ENCODE measurements at regions of chr6 and their contacts with region 1.

Region 1: GRCh38 chr6:137224799-137225198 is 5.6 kb upstream of the IFNGR1 start:
- DNase-seq: no peak
- H3K4me3 Mint-ChIP-seq: no peak overlapping the region
- H3K27ac Mint-ChIP-seq: peak overlapping the region; percentile 47
- H3K4me1 Mint-ChIP-seq: peaks cover 50% of the 10 kb centered on the region
- H3K27me3 Mint-ChIP-seq: peaks cover 2% of the 10 kb centered on the region

Region 2: DNA sequence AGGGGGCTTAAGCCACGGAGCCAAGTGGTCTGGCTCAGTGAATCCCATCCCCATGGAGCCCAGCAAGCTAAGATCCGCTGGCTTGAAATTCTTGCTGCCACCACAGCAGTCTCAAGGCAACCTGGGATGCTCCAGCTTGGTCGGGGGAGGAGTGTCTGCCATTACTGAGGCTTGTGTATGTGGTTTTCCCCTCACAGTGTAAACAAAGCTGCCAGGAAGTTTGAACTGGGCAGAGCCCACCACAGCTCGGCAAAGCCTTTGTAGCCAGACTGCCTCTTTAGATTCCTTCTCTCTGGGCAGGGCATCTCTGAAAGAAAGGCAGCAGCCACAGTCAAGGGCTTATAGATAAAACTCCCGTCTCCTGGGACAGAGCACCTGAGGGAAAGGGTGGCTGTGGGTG is 154.5 kb before region 1 on chr6:
- intact Hi-C with region 1: no loop called
- DNase-seq: no peak
- H3K4me3 Mint-ChIP-seq: no peak overlapping the region
- H3K27ac Mint-ChIP-seq: no peak overlapping the region
- H3K4me1 Mint-ChIP-seq: no peaks in the 10 kb centered on the region
- H3K27me3 Mint-ChIP-seq: peaks cover 70% of the 10 kb centered on the region

Region 3: GRCh38 chr6:137241481-137242011 is 16.7 kb after region 1 on chr6:
- intact Hi-C with region 1: no loop called
- DNase-seq: no peak
- H3K4me3 Mint-ChIP-seq: no peak overlapping the region
- H3K27ac Mint-ChIP-seq: no peak overlapping the region
- H3K4me1 Mint-ChIP-seq: peaks cover 7% of the 10 kb centered on the region
- H3K27me3 Mint-ChIP-seq: peaks cover 3% of the 10 kb centered on the region

Region 4: GRCh38 chr6:137261393-137262160 is 36.8 kb after region 1 on chr6:
- intact Hi-C with region 1: loop called (anchors 5 kb)
- DNase-seq: no peak
- H3K4me3 Mint-ChIP-seq: no peak overlapping the region
- H3K27ac Mint-ChIP-seq: no peak overlapping the region
- H3K4me1 Mint-ChIP-seq: peaks cover 17% of the 10 kb centered on the region
- H3K27me3 Mint-ChIP-seq: peaks cover 36% of the 10 kb centered on the region

Region 5: DNA sequence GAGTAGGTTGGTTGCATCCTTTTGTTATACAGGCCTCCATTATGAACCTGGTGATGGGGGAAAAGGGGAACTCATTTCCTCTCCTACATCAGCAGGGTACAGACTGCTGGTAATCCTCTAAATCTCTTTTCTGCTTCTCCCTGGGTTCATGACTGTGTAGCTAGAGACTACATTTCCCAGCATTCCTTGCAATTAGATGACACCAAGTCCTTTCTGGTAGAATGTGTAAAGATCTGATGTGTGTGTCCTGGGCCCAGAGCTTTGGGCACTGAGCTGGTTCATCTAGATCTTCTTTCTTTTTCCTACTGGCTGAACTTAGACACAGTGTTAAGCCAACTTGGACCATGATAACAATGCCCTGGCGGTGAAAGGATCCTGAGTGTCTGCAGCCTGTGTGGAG is 99.1 kb after region 1 on chr6:
- intact Hi-C with region 1: no loop called
- DNase-seq: no peak
- H3K4me3 Mint-ChIP-seq: no peak overlapping the region
- H3K27ac Mint-ChIP-seq: no peak overlapping the region
- H3K4me1 Mint-ChIP-seq: peaks cover 4% of the 10 kb centered on the region
- H3K27me3 Mint-ChIP-seq: peaks cover 13% of the 10 kb centered on the region